ENCODE measurements at regions of chr2 and their contacts with region 1.

Region 1: GRCh38 chr2:110157153-110157793 is 41.7 kb upstream of the MALL start:
- DNase-seq: no peak
- ATAC-seq: peak; percentile 80 to 90
- H3K4me3 ChIP-seq: no peak overlapping the region
- H3K27ac ChIP-seq: no peak overlapping the region
- H3K4me1 ChIP-seq: no peaks in the 10 kb centered on the region
- H3K27me3 ChIP-seq: no peaks in the 10 kb centered on the region

Region 2: GRCh38 chr2:110101280-110101844 is 55.9 kb before region 1 on chr2:
- intact Hi-C with region 1: loop called in 1 of 4 experiments (anchors 10 kb)
- DNase-seq: peak; percentile 99 to 100 (median 99)
- ATAC-seq: peak; percentile 96 to 97
- H3K4me3 ChIP-seq: no peak overlapping the region
- H3K27ac ChIP-seq: peak overlapping the region; percentile 92
- H3K4me1 ChIP-seq: peaks cover 13% of the 10 kb centered on the region
- H3K27me3 ChIP-seq: no peaks in the 10 kb centered on the region

Region 3: GRCh38 chr2:110983133-110983532 is 825.9 kb after region 1 on chr2:
- intact Hi-C with region 1: no loop called
- DNase-seq: no peak
- ATAC-seq: no peak
- H3K4me3 ChIP-seq: no peak overlapping the region
- H3K27ac ChIP-seq: no peak overlapping the region
- H3K4me1 ChIP-seq: peaks cover 4% of the 10 kb centered on the region
- H3K27me3 ChIP-seq: no peaks in the 10 kb centered on the region